PC-9 (cell line): ENCODE measurements at regions of chr4 and their contacts with region 1.

Region 1: DNA sequence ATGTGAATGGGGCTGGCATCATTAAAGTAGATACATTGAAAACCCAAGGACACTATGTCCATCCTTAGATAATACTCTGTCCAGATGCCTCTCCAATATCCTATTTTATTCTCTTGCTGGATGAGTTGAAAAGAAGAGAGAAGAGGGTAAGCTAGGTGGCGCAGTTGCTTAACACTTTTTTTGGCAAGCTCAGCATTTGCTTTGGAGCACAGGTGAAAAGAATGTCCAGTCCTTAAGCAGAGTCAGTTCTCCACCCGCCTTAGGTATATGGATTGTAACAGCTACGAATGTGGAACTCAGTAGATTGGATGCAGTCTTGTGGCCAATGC is 208.4 kb downstream of the NWD2 start:
- DNase-seq: peak; percentile 66 to 83
- H3K4me3 ChIP-seq: peak overlapping the region; percentile 83
- H3K27ac ChIP-seq: no peak overlapping the region
- H3K4me1 ChIP-seq: peaks cover 12% of the 10 kb centered on the region
- H3K27me3 ChIP-seq: no peaks in the 10 kb centered on the region
- CTCF ChIP-seq: peak; percentile 81

Region 2: GRCh38 chr4:37124800-37125199 is 328.1 kb before region 1 on chr4:
- CTCF ChIA-PET with region 1: no interaction called
- POLR2A ChIA-PET with region 1: no interaction called
- intact Hi-C with region 1: no loop called
- DNase-seq: no peak
- H3K4me3 ChIP-seq: no peak overlapping the region
- H3K27ac ChIP-seq: no peak overlapping the region
- H3K4me1 ChIP-seq: no peaks in the 10 kb centered on the region
- H3K27me3 ChIP-seq: no peaks in the 10 kb centered on the region
- CTCF ChIP-seq: no peak

Region 3: GRCh38 chr4:37423310-37423709 is 29.6 kb before region 1 on chr4:
- CTCF ChIA-PET with region 1: no interaction called
- POLR2A ChIA-PET with region 1: no interaction called
- intact Hi-C with region 1: no loop called
- DNase-seq: no peak
- H3K4me3 ChIP-seq: no peak overlapping the region
- H3K27ac ChIP-seq: no peak overlapping the region
- H3K4me1 ChIP-seq: no peaks in the 10 kb centered on the region
- H3K27me3 ChIP-seq: no peaks in the 10 kb centered on the region
- CTCF ChIP-seq: no peak

Region 4: GRCh38 chr4:37434469-37434868 is 18.4 kb before region 1 on chr4:
- CTCF ChIA-PET with region 1: interaction called, 11 read pairs
- POLR2A ChIA-PET with region 1: no interaction called
- intact Hi-C with region 1: no loop called
- DNase-seq: no peak
- H3K4me3 ChIP-seq: no peak overlapping the region
- H3K27ac ChIP-seq: no peak overlapping the region
- H3K4me1 ChIP-seq: peaks cover 12% of the 10 kb centered on the region
- H3K27me3 ChIP-seq: no peaks in the 10 kb centered on the region
- CTCF ChIP-seq: peak; percentile 40

Region 5: DNA sequence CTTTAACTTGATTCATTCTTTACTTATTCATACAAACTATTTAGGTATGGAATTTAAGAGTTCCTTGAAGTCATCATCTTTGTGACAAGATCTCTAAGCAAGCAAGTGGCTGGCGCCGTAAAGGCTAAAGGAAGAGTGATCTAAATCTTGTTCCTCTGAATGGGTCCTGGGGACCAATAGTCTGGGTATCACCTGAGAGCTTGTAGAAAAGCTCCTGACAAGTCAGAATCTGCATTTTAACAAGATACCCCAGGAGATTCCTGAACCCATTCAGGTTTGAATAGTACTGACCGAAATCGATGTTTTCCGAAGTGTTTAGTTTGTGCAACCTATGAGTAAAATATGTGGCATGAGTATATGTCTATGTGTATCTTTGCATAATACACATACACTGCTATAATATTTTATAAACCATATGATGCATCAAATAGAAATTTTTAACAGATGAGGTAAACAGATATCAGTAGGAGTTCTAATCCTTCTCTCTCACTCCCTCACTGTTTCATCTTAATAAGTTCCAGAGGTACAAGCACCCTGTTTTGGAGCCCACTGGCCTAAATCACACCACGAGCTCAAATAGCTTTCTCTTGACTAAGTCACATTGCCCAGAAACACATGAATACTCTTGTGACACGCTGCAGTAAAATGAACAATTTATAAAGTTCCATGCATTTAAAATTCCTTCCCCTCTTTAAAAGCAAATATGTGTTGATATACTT is 63.3 kb after region 1 on chr4:
- CTCF ChIA-PET with region 1: interaction called, 17 read pairs
- POLR2A ChIA-PET with region 1: no interaction called
- intact Hi-C with region 1: no loop called
- DNase-seq: no peak
- H3K4me3 ChIP-seq: no peak overlapping the region
- H3K27ac ChIP-seq: no peak overlapping the region
- H3K4me1 ChIP-seq: no peaks in the 10 kb centered on the region
- H3K27me3 ChIP-seq: no peaks in the 10 kb centered on the region
- CTCF ChIP-seq: no peak

Region 6: GRCh38 chr4:37561803-37562207 is 108.9 kb after region 1 on chr4:
- CTCF ChIA-PET with region 1: interaction called, 15 read pairs
- POLR2A ChIA-PET with region 1: interaction called, 5 read pairs
- intact Hi-C with region 1: loop called (anchors 1 kb)
- DNase-seq: peak; percentile 43 to 78
- H3K4me3 ChIP-seq: no peak overlapping the region
- H3K27ac ChIP-seq: peak overlapping the region; percentile 61
- H3K4me1 ChIP-seq: peaks cover 24% of the 10 kb centered on the region
- H3K27me3 ChIP-seq: no peaks in the 10 kb centered on the region
- CTCF ChIP-seq: no peak

Region 7: DNA sequence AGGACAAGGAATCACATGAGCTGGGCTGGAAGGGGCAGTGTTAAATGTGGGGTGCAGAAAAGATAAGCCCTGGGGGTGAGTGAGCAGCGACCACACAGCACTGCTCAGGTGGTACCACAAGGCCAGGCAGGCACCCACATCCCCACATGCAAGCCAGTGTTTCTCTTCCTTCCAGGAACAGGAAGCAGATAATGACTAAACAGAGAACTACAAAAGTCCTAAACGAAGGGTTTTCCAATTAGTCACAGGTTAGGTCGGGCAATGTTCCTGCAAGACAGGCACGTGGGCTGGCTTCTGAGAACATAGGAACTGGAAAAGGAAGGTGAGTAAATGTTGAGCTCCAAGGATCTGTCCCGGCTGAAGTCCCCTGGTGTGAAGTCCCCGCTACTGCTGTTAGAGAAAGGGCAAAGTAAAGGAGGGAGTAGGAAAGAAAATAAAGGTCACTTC is 213.7 kb after region 1 on chr4:
- CTCF ChIA-PET with region 1: no interaction called
- POLR2A ChIA-PET with region 1: no interaction called
- intact Hi-C with region 1: loop called (anchors 5 kb)
- DNase-seq: peak; percentile 55 to 95
- H3K4me3 ChIP-seq: no peak overlapping the region
- H3K27ac ChIP-seq: peak overlapping the region; percentile 39
- H3K4me1 ChIP-seq: peaks cover 20% of the 10 kb centered on the region
- H3K27me3 ChIP-seq: no peaks in the 10 kb centered on the region
- CTCF ChIP-seq: peak; percentile 22; the same call in 1 of the 2 replicates

Region 8: GRCh38 chr4:37977471-37978247 is 524.7 kb after region 1 on chr4:
- CTCF ChIA-PET with region 1: no interaction called
- POLR2A ChIA-PET with region 1: no interaction called
- intact Hi-C with region 1: loop called (anchors 10 kb)
- DNase-seq: peak in 1 of 2 experiments; percentile 49
- H3K4me3 ChIP-seq: peak overlapping the region; percentile 64
- H3K27ac ChIP-seq: peak overlapping the region; percentile 50
- H3K4me1 ChIP-seq: peaks cover 46% of the 10 kb centered on the region
- H3K27me3 ChIP-seq: no peaks in the 10 kb centered on the region
- CTCF ChIP-seq: peak; percentile 47; the same call in 1 of the 2 replicates